Activated naive CD4-positive, alpha-beta T cell treated with anti-CD3 and anti-CD28 coated beads for 36 hours (primary cell): ENCODE measurements at regions of chr3 and their contacts with region 1.

Region 1: GRCh38 chr3:20340324-20340928 is 154.4 kb upstream of the SGO1 start:
- DNase-seq: peak; percentile 83
- H3K4me3 Mint-ChIP-seq: no peak overlapping the region
- H3K27ac Mint-ChIP-seq: no peak overlapping the region
- H3K4me1 Mint-ChIP-seq: peaks cover 6% of the 10 kb centered on the region
- H3K27me3 Mint-ChIP-seq: peaks cover 2% of the 10 kb centered on the region

Region 2: DNA sequence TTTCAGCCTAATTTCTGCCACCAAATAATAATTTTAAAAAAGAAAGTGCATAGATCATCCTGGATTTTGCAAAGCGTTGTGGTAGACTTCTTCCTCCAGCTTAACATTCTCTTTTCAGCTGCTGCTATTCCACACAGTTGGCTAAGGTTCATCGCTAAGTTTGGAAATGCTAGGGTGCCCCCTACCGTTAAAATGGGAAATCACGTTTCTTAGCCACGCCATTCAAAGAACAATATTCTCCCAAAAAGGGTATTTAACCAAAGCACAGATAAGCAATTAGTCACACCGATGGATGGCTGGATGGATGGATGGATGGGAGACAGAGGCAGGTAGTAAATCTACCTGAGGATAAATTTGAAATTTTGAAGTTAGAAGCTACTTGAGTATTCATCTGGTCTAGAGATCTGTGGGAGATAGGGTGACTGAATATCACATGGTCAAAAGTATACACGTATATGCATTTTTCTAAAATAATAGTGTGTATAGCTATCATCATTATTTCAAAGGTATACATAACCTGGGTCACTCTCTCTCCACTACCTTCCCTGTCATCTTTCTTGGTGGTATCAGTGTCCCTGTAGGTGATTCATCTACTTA is 473.6 kb before region 1 on chr3:
- CTCF ChIA-PET with region 1: no interaction called
- intact Hi-C with region 1: no loop called
- DNase-seq: peak; percentile 53
- H3K4me3 Mint-ChIP-seq: no peak overlapping the region
- H3K27ac Mint-ChIP-seq: no peak overlapping the region
- H3K4me1 Mint-ChIP-seq: no peaks in the 10 kb centered on the region
- H3K27me3 Mint-ChIP-seq: peaks cover 5% of the 10 kb centered on the region

Region 3: GRCh38 chr3:20930034-20930433 is 589.6 kb after region 1 on chr3:
- CTCF ChIA-PET with region 1: no interaction called
- intact Hi-C with region 1: loop called (anchors 10 kb)
- DNase-seq: no peak
- H3K4me3 Mint-ChIP-seq: no peak overlapping the region
- H3K27ac Mint-ChIP-seq: no peak overlapping the region
- H3K4me1 Mint-ChIP-seq: no peaks in the 10 kb centered on the region
- H3K27me3 Mint-ChIP-seq: no peaks in the 10 kb centered on the region

Region 4: DNA sequence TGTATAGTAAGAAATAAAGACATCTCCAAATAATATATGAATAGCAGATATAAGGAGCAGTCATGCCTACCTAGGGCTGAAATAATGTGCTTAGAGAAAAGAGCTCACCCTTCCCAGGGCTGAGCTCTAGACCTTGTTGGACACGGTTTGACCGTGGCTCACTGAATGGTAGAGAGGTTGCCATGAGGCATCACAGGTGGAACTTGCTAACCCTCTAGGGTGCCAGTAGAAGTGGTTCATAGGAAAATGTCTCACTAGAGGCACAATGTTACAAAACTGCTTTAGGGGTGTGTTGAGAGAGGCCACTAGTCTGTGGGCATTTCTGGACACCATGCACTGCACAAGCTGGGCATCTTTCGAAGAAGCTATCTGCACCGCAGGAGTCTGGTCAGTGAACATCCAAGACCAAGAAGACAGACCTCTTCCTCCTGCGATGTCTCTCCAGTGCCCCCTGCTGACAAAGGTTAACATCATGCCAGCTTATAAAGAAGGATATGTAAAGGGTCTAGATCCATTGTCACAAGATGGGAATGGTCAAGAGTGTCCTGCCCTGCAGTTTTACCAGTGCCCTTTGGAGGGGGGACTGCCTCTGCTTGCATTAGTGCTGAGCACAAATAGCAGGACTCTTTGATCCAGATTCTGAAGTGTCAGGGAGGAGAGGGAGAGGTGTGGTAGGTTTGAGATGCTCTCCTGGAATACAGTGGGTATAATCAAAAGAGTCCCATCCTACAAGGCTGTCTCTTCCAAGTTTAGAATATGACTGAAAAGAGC is 1143.8 kb after region 1 on chr3:
- CTCF ChIA-PET with region 1: no interaction called
- intact Hi-C with region 1: loop called (anchors 5 kb)
- DNase-seq: peak; percentile 21
- H3K4me3 Mint-ChIP-seq: no peak overlapping the region
- H3K27ac Mint-ChIP-seq: no peak overlapping the region
- H3K4me1 Mint-ChIP-seq: no peaks in the 10 kb centered on the region
- H3K27me3 Mint-ChIP-seq: no peaks in the 10 kb centered on the region

Region 5: GRCh38 chr3:21894459-21895340 is 1554.3 kb after region 1 on chr3:
- CTCF ChIA-PET with region 1: no interaction called
- intact Hi-C with region 1: loop called (anchors 1 kb)
- DNase-seq: no peak
- H3K4me3 Mint-ChIP-seq: no peak overlapping the region
- H3K27ac Mint-ChIP-seq: no peak overlapping the region
- H3K4me1 Mint-ChIP-seq: no peaks in the 10 kb centered on the region
- H3K27me3 Mint-ChIP-seq: no peaks in the 10 kb centered on the region